MCF 10A (cell line): ENCODE measurements at regions of chr15 and their contacts with region 1.

Region 1: DNA sequence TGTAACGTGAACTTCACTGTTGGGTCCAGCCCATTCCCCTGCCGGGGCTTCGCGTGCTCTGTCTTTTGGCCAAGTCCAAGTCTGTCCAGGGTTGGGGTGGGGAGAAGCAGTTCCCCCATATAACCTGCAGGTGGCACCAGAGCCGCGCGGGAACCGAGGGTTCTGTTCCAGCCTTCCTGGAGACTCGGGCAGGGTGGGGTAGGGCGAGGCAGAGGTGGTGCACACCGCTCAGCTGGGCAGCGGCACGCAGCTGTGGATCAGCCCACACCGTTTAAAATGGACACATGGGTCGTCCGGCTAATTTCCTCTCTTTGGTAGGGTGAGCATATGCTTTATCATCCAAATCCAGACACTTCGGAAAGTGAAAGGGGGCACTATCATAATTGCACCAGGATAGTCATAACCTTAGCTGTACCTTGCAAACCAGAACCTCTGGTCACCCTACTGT is 118.1 kb downstream of the TBC1D2B start:
- DNase-seq: peak; percentile 77
- H3K4me3 Mint-ChIP-seq: peak overlapping the region; percentile 35
- H3K27ac Mint-ChIP-seq: no peak overlapping the region
- H3K4me1 Mint-ChIP-seq: peaks cover 6% of the 10 kb centered on the region
- H3K27me3 Mint-ChIP-seq: peaks cover 20% of the 10 kb centered on the region
- CTCF ChIP-seq: peak; percentile 94

Region 2: DNA sequence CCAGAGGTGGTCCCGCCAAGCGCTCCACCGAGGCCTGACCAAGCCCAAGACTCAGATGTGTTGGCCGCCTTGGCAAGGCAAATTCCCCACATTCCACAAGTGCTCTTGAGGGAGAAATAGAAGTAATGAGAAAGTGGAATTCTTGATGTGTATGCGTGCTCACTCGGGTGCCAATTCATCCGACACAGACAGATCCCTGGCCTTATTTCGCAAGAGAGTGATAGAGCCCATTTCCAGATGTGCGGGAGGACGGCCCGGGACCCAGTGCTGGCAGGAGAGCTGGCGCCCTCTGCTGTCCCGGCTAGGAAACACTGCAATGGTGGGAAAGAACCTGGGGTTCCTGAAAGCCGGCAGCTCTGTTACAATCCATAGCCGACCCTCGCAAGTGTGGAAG is 462.7 kb before region 1 on chr15:
- CTCF ChIA-PET with region 1: no interaction called
- POLR2A ChIA-PET with region 1: no interaction called
- intact Hi-C with region 1: no loop called
- DNase-seq: peak; percentile 92
- H3K4me3 Mint-ChIP-seq: no peak overlapping the region
- H3K27ac Mint-ChIP-seq: no peak overlapping the region
- H3K4me1 Mint-ChIP-seq: peaks cover 24% of the 10 kb centered on the region
- H3K27me3 Mint-ChIP-seq: no peaks in the 10 kb centered on the region
- CTCF ChIP-seq: peak; percentile 98

Region 3: GRCh38 chr15:78093242-78094020 is 134.0 kb after region 1 on chr15:
- CTCF ChIA-PET with region 1: interaction called, 14 read pairs
- POLR2A ChIA-PET with region 1: no interaction called
- intact Hi-C with region 1: no loop called
- DNase-seq: no peak
- H3K4me3 Mint-ChIP-seq: no peak overlapping the region
- H3K27ac Mint-ChIP-seq: no peak overlapping the region
- H3K4me1 Mint-ChIP-seq: no peaks in the 10 kb centered on the region
- H3K27me3 Mint-ChIP-seq: no peaks in the 10 kb centered on the region
- CTCF ChIP-seq: no peak